HCT116 (cell line): ENCODE measurements at regions of chr10 and their contacts with region 1.

Region 1: DNA sequence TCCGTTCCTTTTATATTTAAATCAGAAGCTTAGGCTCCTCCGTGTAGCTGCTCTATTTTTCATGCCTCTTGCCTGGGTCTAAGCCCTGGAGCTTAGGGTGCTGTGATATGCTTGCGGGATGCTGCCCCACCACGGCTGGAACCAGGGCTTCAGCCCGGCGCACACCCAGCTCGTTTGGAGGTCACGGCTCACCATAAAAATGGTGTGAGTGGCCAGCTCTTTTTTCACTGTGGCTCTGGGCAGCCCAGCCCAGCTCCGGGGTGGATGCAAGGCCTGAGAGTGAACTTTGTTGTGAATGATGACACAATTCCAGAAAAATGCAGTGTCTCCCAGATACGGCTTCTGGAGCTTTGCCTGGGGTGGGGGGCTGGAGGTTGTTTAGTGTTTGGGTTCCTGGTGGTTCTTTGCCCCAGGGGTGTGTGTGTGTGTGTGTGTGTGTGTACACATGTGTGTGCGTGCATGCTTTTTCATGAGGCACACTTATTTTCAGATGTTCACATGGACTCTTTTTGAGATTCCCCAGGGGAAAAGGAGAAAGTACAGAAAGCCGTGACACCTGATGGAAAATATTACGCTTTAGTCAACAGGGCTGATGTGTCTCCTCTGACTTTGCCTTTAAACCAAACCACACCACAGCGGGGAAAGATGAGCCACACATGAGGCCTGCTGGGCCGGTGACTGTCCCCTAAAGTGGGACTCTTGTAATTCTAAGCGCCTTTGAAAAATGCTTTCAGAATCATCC is 46.2 kb downstream of the GRK5 start:
- DNase-seq: peak; percentile 97
- ATAC-seq: peak; percentile 85
- H3K4me3 ChIP-seq: peak overlapping the region; percentile 20 to 43
- H3K27ac ChIP-seq: peak overlapping the region; percentile 93
- H3K4me1 ChIP-seq: peaks cover 40 to 68% of the 10 kb centered on the region in 2 experiments
- H3K27me3 ChIP-seq: no peaks in the 10 kb centered on the region
- CTCF ChIP-seq: 0 out of 6 replicates have a peak, but pooled peaks of 1 of the 3 experiments have one; percentile 4
- POLR2A ChIP-seq: no peak
- RAD21 ChIP-seq: no peak

Region 2: DNA sequence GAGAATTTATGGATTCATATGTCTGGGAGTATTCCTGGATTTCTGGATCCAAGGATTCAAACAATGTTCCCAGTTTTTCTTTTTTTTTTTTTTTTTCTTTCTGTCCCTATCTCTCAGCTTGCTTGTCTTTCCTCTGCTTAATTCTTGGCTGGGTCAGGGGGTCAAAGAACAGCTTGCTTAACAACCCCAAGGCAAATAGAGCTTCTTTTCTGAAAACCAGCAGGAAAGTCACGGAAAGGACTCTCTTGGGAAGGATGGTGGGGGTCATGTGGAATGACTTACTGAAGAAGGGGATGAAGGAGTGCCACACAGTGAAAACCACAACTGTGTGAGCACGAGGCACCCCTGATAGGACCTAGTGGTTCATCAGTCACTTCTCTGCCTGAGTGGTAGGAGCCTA is 10.1 kb before region 1 on chr10:
- CTCF ChIA-PET with region 1: no interaction called
- POLR2A ChIA-PET with region 1: interaction called, 16 read pairs
- RAD21 ChIA-PET with region 1: no interaction called
- intact Hi-C with region 1: no loop called
- DNase-seq: no peak
- ATAC-seq: no peak
- H3K4me3 ChIP-seq: no peak overlapping the region
- H3K27ac ChIP-seq: no peak overlapping the region
- H3K4me1 ChIP-seq: peaks cover 0 to 10% of the 10 kb centered on the region in 2 experiments; a peak in 1 of 4 replicates
- H3K27me3 ChIP-seq: no peaks in the 10 kb centered on the region
- CTCF ChIP-seq: no peak
- POLR2A ChIP-seq: no peak
- RAD21 ChIP-seq: no peak

Region 3: GRCh38 chr10:119270762-119271366 is 17.3 kb after region 1 on chr10:
- CTCF ChIA-PET with region 1: no interaction called
- POLR2A ChIA-PET with region 1: interaction called, 19 read pairs
- RAD21 ChIA-PET with region 1: interaction called in 1 of 2 experiments, 5 read pairs
- intact Hi-C with region 1: loop called (anchors 1 kb)
- DNase-seq: peak; percentile 41
- ATAC-seq: peak; percentile 81
- H3K4me3 ChIP-seq: peak overlapping the region; percentile 28 to 48
- H3K27ac ChIP-seq: peak overlapping the region; percentile 81
- H3K4me1 ChIP-seq: peaks cover 47 to 72% of the 10 kb centered on the region in 2 experiments
- H3K27me3 ChIP-seq: no peaks in the 10 kb centered on the region
- CTCF ChIP-seq: no peak
- POLR2A ChIP-seq: peak; percentile 58
- RAD21 ChIP-seq: no peak

Region 4: DNA sequence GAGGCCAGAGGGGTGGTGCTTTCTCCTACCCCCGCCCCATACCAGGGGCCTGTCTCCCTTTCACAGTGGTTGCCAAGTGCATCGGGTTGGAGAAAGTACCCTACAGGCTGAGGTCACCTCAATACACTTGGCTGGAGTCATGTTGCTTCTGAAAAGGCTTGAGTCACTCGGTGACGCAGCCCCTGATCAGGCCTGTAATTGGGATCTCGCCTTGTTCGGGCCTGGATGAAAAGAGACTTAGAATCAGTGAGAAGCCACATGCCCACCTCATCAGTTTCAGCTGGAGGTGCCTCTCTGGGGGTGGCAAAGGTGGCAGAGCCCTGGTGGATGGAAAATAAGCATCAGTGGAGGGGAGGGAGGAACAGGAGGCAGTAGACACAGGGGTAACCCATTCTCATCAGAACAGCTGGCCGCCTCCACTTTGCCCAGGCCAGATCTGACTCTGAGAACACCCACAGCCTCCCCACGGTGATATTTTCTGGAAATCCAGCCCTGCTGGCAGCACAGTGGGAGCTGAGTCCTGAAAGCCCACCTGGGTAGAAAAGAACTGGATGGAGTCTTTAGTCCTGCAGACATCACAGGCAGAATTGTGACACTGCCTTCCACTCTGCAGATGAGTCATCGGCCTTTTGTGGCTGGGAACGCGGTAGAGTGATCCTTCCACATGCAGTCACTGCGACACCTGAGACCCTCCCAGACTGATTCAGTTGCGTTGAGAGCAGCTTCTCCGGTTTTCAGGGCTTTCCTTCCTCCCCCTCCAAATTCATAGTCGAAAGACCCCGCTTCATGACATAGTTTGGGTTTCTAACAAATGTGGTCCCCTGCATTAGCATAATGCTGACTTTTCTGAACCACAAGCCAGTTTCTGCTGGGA is 61.8 kb after region 1 on chr10:
- CTCF ChIA-PET with region 1: no interaction called
- POLR2A ChIA-PET with region 1: interaction called, 5 read pairs
- RAD21 ChIA-PET with region 1: no interaction called
- intact Hi-C with region 1: loop called (anchors 5 kb)
- DNase-seq: peak; percentile 91
- ATAC-seq: peak; percentile 72
- H3K4me3 ChIP-seq: peak overlapping the region; percentile 13 to 38
- H3K27ac ChIP-seq: peak overlapping the region; percentile 98
- H3K4me1 ChIP-seq: peaks cover 60 to 74% of the 10 kb centered on the region in 2 experiments
- H3K27me3 ChIP-seq: no peaks in the 10 kb centered on the region
- CTCF ChIP-seq: no peak
- POLR2A ChIP-seq: no peak
- RAD21 ChIP-seq: no peak

Region 5: GRCh38 chr10:119330342-119330741 is 76.7 kb after region 1 on chr10:
- CTCF ChIA-PET with region 1: no interaction called
- POLR2A ChIA-PET with region 1: no interaction called
- RAD21 ChIA-PET with region 1: no interaction called
- intact Hi-C with region 1: no loop called
- DNase-seq: no peak
- ATAC-seq: no peak
- H3K4me3 ChIP-seq: no peak overlapping the region
- H3K27ac ChIP-seq: no peak overlapping the region
- H3K4me1 ChIP-seq: peaks cover 2 to 19% of the 10 kb centered on the region in 2 experiments; a peak in 3 of 4 replicates
- H3K27me3 ChIP-seq: no peaks in the 10 kb centered on the region
- CTCF ChIP-seq: no peak
- POLR2A ChIP-seq: no peak
- RAD21 ChIP-seq: no peak